Activated T-helper 2 cell treated with anti-CD3 and anti-CD28 coated beads, Interferon-gamma antibody, Interleukin-2, Interleukin-4, amounts not matched to agents 10 μg/mL and 5 μg/mL and 100 μg/mL, durations not matched to agents 14 hours and 24 hours and 36 hours (primary cell): ENCODE measurements at regions of chr17 and their contacts with region 1.

Region 1: GRCh38 chr17:50297407-50297865 is 23.2 kb downstream of the TMEM92 start:
- DNase-seq: peak; percentile 72
- H3K4me3 Mint-ChIP-seq: no peak overlapping the region
- H3K27ac Mint-ChIP-seq: peak overlapping the region; percentile 86
- H3K4me1 Mint-ChIP-seq: peaks cover 35% of the 10 kb centered on the region
- H3K27me3 Mint-ChIP-seq: no peaks in the 10 kb centered on the region

Region 2: DNA sequence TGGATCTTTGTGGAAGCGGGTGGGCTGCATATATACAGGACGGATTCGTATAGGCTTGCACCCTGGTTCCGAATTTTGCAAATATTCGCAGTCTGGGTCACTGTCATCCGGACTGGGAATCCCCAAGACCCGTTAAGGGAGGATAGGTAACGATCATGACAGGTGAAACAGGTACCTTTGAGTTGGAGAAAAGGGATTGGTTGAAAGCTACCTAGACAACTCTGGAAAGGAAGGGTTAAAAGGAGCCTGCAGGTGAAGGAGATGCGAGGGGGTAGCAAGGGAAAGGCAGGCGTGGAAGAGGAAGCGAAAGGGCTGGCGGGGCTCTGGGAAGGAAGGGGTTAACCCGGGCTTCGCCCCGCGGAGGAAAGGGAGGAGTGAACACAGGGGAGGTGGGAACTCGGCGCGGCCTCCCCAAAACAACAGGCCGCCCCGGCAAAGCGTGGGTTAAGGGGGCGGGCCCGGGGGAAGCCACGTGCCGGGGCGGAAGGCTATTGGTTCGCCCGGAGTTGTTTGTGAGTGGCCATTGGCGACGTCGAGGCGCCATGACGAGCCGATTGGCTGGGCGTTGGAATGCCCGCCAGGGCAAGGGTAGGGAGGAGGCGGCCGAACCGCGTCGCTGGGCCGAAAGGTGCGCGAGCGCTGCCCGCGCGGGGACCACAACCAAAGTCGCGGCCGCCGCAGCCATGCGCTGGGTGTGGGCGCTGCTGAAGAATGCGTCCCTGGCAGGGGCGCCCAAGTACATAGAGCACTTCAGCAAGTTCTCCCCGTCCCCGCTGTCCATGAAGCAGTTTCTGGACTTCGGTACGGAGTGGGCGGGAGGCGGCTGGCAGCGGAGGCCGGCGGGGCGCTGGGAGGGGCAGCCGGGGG is 202.4 kb before region 1 on chr17 and contains the start of gene PDK2:
- intact Hi-C with region 1: loop called (anchors 5 kb)
- DNase-seq: peak; percentile 95
- H3K4me3 Mint-ChIP-seq: peak within 1 kb of the TSS; percentile 86
- H3K27ac Mint-ChIP-seq: peak within 1 kb of the TSS; percentile 79
- H3K4me1 Mint-ChIP-seq: peaks cover 13% of the 10 kb centered on the region
- H3K27me3 Mint-ChIP-seq: no peaks in the 10 kb centered on the region
- total RNA-seq, gene PDK2: 11.0 and 12.1 TPM in 2 replicates

Region 3: GRCh38 chr17:50169121-50169764 is 128.2 kb before region 1 on chr17:
- intact Hi-C with region 1: loop called (anchors 2 kb)
- DNase-seq: peak; percentile 61
- H3K4me3 Mint-ChIP-seq: peak overlapping the region; percentile 17
- H3K27ac Mint-ChIP-seq: peak overlapping the region; percentile 47
- H3K4me1 Mint-ChIP-seq: peaks cover 15% of the 10 kb centered on the region
- H3K27me3 Mint-ChIP-seq: no peaks in the 10 kb centered on the region

Region 4: GRCh38 chr17:50269477-50270434 is 27.7 kb before region 1 on chr17:
- intact Hi-C with region 1: loop called (anchors 1 kb)
- DNase-seq: peak; percentile 58
- H3K4me3 Mint-ChIP-seq: no peak overlapping the region
- H3K27ac Mint-ChIP-seq: no peak overlapping the region
- H3K4me1 Mint-ChIP-seq: peaks cover 19% of the 10 kb centered on the region
- H3K27me3 Mint-ChIP-seq: peaks cover 2% of the 10 kb centered on the region

Region 5: GRCh38 chr17:50283246-50283645 is 14.2 kb before region 1 on chr17:
- intact Hi-C with region 1: loop called (anchors 2 kb)
- DNase-seq: peak; percentile 34
- H3K4me3 Mint-ChIP-seq: peak overlapping the region; percentile 63
- H3K27ac Mint-ChIP-seq: peak overlapping the region; percentile 46
- H3K4me1 Mint-ChIP-seq: peaks cover 41% of the 10 kb centered on the region
- H3K27me3 Mint-ChIP-seq: no peaks in the 10 kb centered on the region

Region 6: DNA sequence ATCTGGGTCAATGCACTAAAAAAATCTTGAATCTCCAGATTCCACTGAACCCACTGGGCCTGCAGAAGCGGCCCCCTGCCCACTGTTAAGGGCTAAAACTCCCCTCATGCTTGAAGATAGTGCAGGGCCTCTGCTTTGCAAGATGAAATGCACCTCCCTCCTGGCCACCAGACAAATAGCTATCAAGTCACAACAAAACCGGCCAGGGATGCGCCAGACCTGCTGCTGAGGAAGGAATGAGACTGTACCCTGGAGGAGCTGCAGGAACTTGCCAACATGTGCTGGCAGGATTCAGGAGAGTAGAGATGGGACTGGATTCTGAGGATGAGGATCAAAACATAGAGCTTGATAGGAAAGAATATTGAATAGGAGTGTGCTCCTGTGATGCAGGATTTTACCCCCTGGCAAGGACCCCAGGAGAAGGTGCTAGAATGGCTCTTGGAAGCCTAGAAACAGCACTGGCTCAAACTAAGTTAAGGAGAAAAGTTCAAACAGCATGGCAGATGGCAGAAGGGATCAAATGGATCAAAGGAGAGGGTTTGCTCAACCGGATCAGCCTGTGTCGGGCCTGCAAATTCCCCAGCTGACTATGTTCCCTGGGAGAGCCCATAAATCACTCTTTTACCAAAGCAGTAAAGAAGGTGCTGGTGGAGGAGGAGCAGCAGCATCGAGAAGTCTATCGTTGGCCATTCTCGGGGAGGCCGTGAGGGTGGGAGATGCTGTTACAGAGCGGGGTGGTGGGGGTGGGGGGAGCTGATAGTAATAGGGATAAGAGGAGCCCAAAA is 21.3 kb after region 1 on chr17:
- intact Hi-C with region 1: no loop called
- DNase-seq: no peak
- H3K4me3 Mint-ChIP-seq: no peak overlapping the region
- H3K27ac Mint-ChIP-seq: peak overlapping the region; percentile 35
- H3K4me1 Mint-ChIP-seq: peaks cover 7% of the 10 kb centered on the region
- H3K27me3 Mint-ChIP-seq: no peaks in the 10 kb centered on the region

Region 7: GRCh38 chr17:50331085-50331791 is 33.8 kb after region 1 on chr17:
- intact Hi-C with region 1: loop called (anchors 5 kb)
- DNase-seq: no peak
- H3K4me3 Mint-ChIP-seq: no peak overlapping the region
- H3K27ac Mint-ChIP-seq: peak overlapping the region; percentile 93
- H3K4me1 Mint-ChIP-seq: peaks cover 39% of the 10 kb centered on the region
- H3K27me3 Mint-ChIP-seq: no peaks in the 10 kb centered on the region